SK-N-SH (cell line): ENCODE measurements at regions of chr3 and their contacts with region 1.

Region 1: DNA sequence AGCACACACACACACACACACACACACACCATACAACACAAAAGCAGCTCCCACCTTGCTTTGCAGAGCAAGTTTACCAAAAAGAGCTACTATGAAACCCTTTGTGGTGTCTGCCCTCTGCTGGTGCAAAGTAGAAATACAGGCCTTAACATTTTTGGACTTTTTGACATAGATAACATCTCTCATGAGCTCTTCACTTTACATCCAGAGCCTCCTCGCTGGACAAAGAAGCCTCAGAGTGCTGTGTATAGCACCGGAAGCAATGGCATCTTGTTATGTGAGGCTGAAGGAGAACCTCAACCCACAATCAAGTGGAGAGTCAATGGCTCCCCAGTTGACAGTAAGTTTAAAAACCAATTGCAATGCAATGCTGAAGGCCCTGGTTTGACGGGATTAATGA is 157.9 kb downstream of the CHL1 start:
- DNase-seq: peak; percentile 35
- H3K4me3 ChIP-seq: no peak overlapping the region; a peak in 1 of 4 replicates
- H3K27ac ChIP-seq: no peak overlapping the region
- H3K4me1 ChIP-seq: no peaks in the 10 kb centered on the region; a peak in 1 of 4 replicates
- H3K27me3 ChIP-seq: no peaks in the 10 kb centered on the region
- CTCF ChIP-seq: peak; percentile 82
- EP300 ChIP-seq: no peak
- RAD21 ChIP-seq: peak; percentile 90

Region 2: DNA sequence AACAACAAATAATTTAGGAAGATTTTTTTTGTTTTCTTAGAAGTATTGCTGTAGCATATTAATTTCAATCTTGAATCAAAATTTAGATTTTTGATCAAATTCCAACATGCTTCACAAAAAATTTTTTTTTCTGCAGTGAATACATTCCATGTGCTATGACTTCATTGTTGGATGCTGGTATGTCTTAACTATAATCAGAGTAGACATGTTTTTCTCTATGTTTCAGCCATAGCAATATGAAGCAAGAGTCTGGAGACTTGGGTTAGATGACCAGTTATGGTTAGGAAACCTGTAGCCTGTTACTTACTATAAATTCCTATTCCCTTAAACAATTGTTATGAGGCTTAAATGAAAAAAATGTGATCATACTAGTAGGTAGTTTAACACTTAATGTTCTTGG is 334.0 kb before region 1 on chr3:
- CTCF ChIA-PET with region 1: interaction called, 13 read pairs
- POLR2A ChIA-PET with region 1: no interaction called
- DNase-seq: no peak
- H3K4me3 ChIP-seq: no peak overlapping the region
- H3K27ac ChIP-seq: no peak overlapping the region
- H3K4me1 ChIP-seq: no peaks in the 10 kb centered on the region
- H3K27me3 ChIP-seq: no peaks in the 10 kb centered on the region
- CTCF ChIP-seq: no peak
- EP300 ChIP-seq: no peak
- RAD21 ChIP-seq: no peak

Region 3: DNA sequence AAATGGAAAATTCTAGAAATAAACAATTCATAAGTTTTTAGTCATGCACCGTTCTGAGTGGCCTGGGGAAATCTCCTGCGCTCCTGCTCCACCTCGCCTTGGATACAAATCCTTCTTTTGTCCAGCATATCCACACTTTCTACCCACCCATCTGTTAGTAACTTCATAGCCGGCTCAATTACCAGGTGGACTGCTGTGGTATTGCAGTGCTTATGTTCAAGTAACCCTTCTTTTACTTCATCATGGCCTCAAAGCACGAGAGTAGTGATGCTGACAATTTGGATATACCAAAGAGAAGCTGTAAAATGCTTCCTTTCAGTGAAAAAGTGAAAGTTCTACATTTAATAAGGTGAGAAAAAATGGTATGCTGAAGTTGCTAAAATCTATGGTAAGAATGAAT is 300.2 kb before region 1 on chr3:
- CTCF ChIA-PET with region 1: interaction called, 265 read pairs
- POLR2A ChIA-PET with region 1: interaction called, 3 read pairs
- DNase-seq: no peak
- H3K4me3 ChIP-seq: no peak overlapping the region
- H3K27ac ChIP-seq: no peak overlapping the region
- H3K4me1 ChIP-seq: no peaks in the 10 kb centered on the region
- H3K27me3 ChIP-seq: no peaks in the 10 kb centered on the region
- CTCF ChIP-seq: no peak
- EP300 ChIP-seq: no peak
- RAD21 ChIP-seq: no peak

Region 4: GRCh38 chr3:294096-294495 is 60.3 kb before region 1 on chr3:
- CTCF ChIA-PET with region 1: interaction called, 13 read pairs
- POLR2A ChIA-PET with region 1: no interaction called
- DNase-seq: no peak
- H3K4me3 ChIP-seq: no peak overlapping the region
- H3K27ac ChIP-seq: no peak overlapping the region
- H3K4me1 ChIP-seq: peaks cover 0 to 6% of the 10 kb centered on the region in 2 experiments; a peak in 2 of 4 replicates
- H3K27me3 ChIP-seq: no peaks in the 10 kb centered on the region
- CTCF ChIP-seq: no peak
- EP300 ChIP-seq: no peak
- RAD21 ChIP-seq: no peak

Region 5: GRCh38 chr3:325495-325894 is 28.9 kb before region 1 on chr3:
- CTCF ChIA-PET with region 1: interaction called, 10 read pairs
- POLR2A ChIA-PET with region 1: no interaction called
- DNase-seq: no peak
- H3K4me3 ChIP-seq: no peak overlapping the region
- H3K27ac ChIP-seq: no peak overlapping the region
- H3K4me1 ChIP-seq: no peaks in the 10 kb centered on the region
- H3K27me3 ChIP-seq: no peaks in the 10 kb centered on the region
- CTCF ChIP-seq: no peak
- EP300 ChIP-seq: no peak
- RAD21 ChIP-seq: no peak

Region 6: GRCh38 chr3:377158-377561 is 22.7 kb after region 1 on chr3:
- CTCF ChIA-PET with region 1: interaction called, 13 read pairs
- POLR2A ChIA-PET with region 1: no interaction called
- DNase-seq: peak; percentile 36
- H3K4me3 ChIP-seq: peak overlapping the region; percentile 12 to 49; a peak in 1 of 4 replicates
- H3K27ac ChIP-seq: no peak overlapping the region
- H3K4me1 ChIP-seq: no peaks in the 10 kb centered on the region
- H3K27me3 ChIP-seq: no peaks in the 10 kb centered on the region
- CTCF ChIP-seq: peak; percentile 57
- EP300 ChIP-seq: no peak
- RAD21 ChIP-seq: peak; percentile 70